ENCODE measurements at regions of chr17 and their contacts with region 1.

Region 1: GRCh38 chr17:5249615-5250014 is 15.0 kb upstream of the SCIMP start:
- DNase-seq: peak in 6 of 10 donors; percentile 43 to 77 (median 50)
- H3K4me3 ChIP-seq: no peak overlapping the region
- H3K27ac ChIP-seq: peak overlapping the region in 2 of 59 donors; percentile 29 to 61
- H3K27me3 ChIP-seq: no peaks in the 10 kb centered on the region
- CTCF ChIP-seq: peak; percentile 38 to 79 (median 66)

Region 2: GRCh38 chr17:5304636-5305035 is 55.0 kb after region 1 on chr17:
- intact Hi-C with region 1: loop called (anchors 2 to 10 kb)
- DNase-seq: no peak
- H3K4me3 ChIP-seq: no peak overlapping the region
- H3K27ac ChIP-seq: peak overlapping the region in 6 of 59 donors; percentile 27 to 73 (median 46)
- H3K27me3 ChIP-seq: no peaks in the 10 kb centered on the region
- CTCF ChIP-seq: no peak

Region 3: DNA sequence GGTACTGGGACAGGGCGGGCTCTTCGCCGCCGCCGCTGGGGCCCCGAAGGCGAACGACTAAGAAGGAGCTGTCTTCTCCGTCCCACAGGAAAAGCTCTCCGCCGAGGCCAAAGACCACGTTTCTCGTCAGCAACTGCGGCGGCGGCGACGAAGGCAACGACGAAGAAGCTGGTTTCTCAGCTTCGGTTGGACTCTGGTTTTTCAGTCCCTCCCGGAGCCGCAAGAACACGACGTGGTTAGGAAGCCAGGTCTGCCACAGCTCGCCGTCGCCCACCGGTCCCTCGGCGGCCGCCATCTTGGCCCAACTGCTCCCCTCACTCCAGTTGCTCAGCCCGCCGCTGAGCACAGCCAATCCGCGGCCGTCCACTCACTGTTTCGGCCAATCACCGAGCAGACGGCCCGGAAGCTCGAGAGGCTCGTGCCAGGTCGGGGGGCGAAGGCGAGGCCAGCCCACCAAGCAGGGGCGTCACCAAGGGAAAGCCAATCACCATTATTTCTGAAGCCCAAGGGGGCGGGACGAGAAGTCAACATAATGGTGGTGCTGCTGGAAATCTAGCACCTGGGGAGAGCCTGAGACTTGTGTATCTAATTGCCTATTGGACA is 169.8 kb after region 1 on chr17 and contains the start of gene NUP88:
- intact Hi-C with region 1: loop called in 1 of 2 experiments (anchors 10 kb)
- DNase-seq: peak; percentile 94 to 98 (median 98)
- H3K4me3 ChIP-seq: peak within 1 kb of the TSS; percentile 59 to 99 (median 91)
- H3K27ac ChIP-seq: peak within 1 kb of the TSS; percentile 44 to 94 (median 86)
- H3K27me3 ChIP-seq: no peaks in the 10 kb centered on the region
- CTCF ChIP-seq: peak in 16 of 56 donors; percentile 4 to 62 (median 23)
- total RNA-seq, gene NUP88: 34.5 to 69.6 (median 50.1) TPM